ENCODE measurements at regions of chr9 and their contacts with region 1.

Region 1: DNA sequence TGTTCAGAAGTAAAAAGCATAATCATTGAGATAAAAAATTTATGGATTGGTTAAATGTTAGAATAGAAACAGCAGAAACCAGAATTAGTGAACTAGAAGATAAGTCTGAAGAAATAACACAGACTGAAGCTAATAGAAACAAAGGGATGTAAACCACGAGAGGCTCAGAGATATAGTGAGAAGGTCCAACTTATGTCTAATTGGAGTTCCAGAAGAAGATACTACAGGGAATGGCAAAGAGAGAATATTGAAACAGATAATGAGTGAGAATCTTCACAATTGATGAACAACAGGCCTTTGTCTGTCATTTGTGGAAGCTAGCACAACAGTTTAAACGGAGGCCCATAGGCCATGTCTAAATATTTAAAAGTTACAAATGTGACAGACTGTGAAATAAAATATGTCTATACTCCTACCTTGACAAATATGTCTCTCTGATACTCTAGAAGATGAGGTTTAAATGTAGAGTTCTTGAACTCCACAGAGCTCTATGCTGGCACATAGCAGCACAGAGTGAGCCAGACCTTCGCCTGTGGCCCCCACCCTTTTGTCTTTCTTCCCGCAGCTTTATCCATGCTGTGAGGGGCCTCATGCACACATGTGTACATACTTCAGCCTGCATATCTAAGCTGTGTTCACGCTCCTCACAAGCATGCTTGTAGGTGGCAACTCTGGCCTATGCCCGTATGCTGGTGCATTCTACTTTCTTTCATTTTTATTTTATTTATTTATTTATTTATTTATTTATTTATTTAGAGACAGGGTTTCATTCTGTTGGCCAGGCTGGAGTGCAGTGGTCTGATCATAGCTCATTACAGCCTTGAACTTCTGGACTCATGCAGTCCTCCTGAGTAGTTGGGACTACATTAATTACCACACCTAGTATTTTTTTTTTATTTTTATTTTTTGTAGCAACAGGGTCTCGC is 45.0 kb upstream of the ABL1 start:
- DNase-seq: no peak
- ATAC-seq: no peak
- H3K4me3 ChIP-seq: no peak overlapping the region
- H3K27ac ChIP-seq: no peak overlapping the region
- H3K4me1 ChIP-seq: peaks cover 4 to 8% of the 10 kb centered on the region in 2 donors
- H3K27me3 ChIP-seq: no peaks in the 10 kb centered on the region
- CTCF ChIP-seq: no peak
- POLR2A ChIP-seq: no peak

Region 2: GRCh38 chr9:130805510-130806326 is 15.7 kb after region 1 on chr9:
- in situ Hi-C with region 1: no loop called
- intact Hi-C with region 1: loop called (anchors 2 kb)
- DNase-seq: no peak
- ATAC-seq: no peak
- H3K4me3 ChIP-seq: no peak overlapping the region
- H3K27ac ChIP-seq: no peak overlapping the region
- H3K4me1 ChIP-seq: no peaks in the 10 kb centered on the region
- H3K27me3 ChIP-seq: no peaks in the 10 kb centered on the region
- CTCF ChIP-seq: no peak
- POLR2A ChIP-seq: no peak

Region 3: DNA sequence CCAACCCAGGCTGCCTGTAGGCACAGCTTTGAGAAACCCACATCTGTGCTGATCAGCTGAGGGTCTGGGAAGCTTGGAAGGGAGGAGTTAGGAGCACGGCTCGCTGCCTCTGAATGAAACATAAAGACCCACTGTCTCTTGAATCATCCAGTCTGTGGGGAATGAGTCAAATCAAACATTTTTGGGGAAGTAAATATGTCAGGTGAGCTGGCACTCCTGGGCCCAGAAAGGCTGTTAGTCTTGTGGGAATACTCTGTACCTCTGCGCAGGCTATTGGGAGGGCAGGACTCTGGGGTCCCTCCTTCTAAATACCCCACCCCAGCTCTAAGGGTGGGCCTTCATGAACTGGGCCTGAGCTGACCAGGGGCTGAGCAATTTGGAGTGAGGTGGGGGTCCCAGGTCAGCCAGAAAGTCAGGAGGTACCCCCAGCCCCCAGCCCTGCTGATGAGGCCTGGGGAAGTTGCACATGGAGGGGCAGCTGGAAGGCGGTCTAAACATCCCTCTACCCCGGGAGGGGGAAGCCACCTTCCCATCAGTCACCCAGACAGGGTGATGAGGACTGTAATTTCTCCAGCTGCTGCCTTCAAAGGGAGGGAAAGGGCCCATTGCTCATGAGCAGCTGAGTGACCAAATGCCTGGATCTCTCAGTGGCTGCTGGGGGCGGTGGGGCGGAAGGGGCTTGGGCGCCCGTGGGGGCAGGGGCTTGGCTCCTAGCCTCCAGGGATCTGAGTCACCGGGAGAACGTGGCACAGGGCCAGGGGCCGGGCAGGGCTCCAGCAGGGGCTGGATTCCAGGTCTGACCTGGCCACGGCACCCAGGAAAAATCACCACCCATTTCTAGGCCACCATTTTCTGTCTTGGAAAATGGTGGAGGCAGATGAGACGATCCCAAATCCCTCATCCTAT is 138.2 kb after region 1 on chr9:
- in situ Hi-C with region 1: no loop called
- intact Hi-C with region 1: no loop called
- DNase-seq: no peak
- ATAC-seq: no peak
- H3K4me3 ChIP-seq: no peak overlapping the region
- H3K27ac ChIP-seq: no peak overlapping the region
- H3K4me1 ChIP-seq: no peaks in the 10 kb centered on the region
- H3K27me3 ChIP-seq: peaks cover 12 to 17% (median 15%) of the 10 kb centered on the region in 3 donors
- CTCF ChIP-seq: no peak
- POLR2A ChIP-seq: no peak

Measured in gastrocnemius medialis (tissue), 4 donors.